Mammary epithelial cell (primary cell): ENCODE measurements at regions of chr11 and their contacts with region 1.

Region 1: GRCh38 chr11:118198370-118198769 is 21.9 kb upstream of the SCN2B start:
- DNase-seq: peak; percentile 29
- H3K4me3 ChIP-seq: peak overlapping the region in 1 of 3 experiments; percentile 30
- H3K27ac ChIP-seq: no peak overlapping the region
- H3K4me1 ChIP-seq: peaks cover 18% of the 10 kb centered on the region
- H3K27me3 ChIP-seq: no peaks in the 10 kb centered on the region
- CTCF ChIP-seq: peak; percentile 85 to 97

Region 2: GRCh38 chr11:118027691-118028090 is 170.7 kb before region 1 on chr11:
- CTCF ChIA-PET with region 1: no interaction called
- dilution Hi-C with region 1: no loop called
- in situ Hi-C with region 1: no loop called
- intact Hi-C with region 1: no loop called
- DNase-seq: no peak
- H3K4me3 ChIP-seq: no peak overlapping the region
- H3K27ac ChIP-seq: no peak overlapping the region
- H3K4me1 ChIP-seq: no peaks in the 10 kb centered on the region
- H3K27me3 ChIP-seq: no peaks in the 10 kb centered on the region
- CTCF ChIP-seq: no peak

Region 3: DNA sequence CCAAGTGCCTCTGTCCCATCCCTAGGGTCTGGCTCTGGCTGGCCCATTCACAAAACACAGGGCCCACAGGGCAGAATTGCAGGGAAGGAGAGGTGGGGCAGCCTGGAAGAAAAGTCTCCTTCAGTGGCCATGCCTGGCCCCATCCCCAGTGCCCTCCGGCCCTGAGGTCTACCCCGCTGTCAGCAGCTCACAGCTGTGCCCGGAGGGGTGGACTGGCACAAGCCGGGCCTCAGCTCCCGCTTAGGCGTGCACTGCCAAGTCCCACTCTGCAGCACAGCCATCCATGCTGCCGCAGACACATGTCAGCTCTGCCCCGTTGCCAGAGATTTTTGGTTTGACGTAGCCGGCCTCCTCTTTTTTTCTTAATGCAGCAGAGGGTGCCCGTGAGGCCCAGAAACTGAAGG is 18.1 kb before region 1 on chr11:
- CTCF ChIA-PET with region 1: interaction called, 3 read pairs
- dilution Hi-C with region 1: no loop called
- in situ Hi-C with region 1: no loop called
- intact Hi-C with region 1: loop called (anchors 1 kb)
- DNase-seq: peak; percentile 64
- H3K4me3 ChIP-seq: no peak overlapping the region
- H3K27ac ChIP-seq: no peak overlapping the region
- H3K4me1 ChIP-seq: peaks cover 19% of the 10 kb centered on the region
- H3K27me3 ChIP-seq: no peaks in the 10 kb centered on the region
- CTCF ChIP-seq: peak in 1 of 2 donors; percentile 33

Region 4: DNA sequence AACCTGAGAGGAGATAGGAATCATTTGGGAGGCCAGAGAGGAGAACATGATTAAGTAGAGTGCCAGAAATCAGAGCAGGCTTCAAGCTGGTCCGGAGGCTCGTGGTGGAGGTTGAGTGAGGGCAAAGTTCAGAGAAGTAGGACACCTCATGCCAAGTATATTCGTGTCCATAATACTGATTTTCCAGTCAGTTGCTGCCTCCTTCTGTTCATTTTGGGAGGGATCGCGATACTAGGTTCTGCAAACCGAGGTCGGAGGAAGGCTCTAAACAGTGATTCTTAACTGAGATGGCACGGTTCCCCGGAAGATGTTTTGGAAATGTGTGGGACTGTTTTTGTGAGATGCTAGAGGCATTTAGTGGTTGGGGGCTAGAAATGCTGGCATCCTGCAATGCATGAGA is 92.6 kb after region 1 on chr11:
- CTCF ChIA-PET with region 1: interaction called, 4 read pairs
- dilution Hi-C with region 1: no loop called
- in situ Hi-C with region 1: loop called (anchors 5 kb)
- intact Hi-C with region 1: loop called (anchors 1 kb)
- DNase-seq: peak; percentile 63
- H3K4me3 ChIP-seq: no peak overlapping the region
- H3K27ac ChIP-seq: no peak overlapping the region
- H3K4me1 ChIP-seq: peaks cover 30% of the 10 kb centered on the region
- H3K27me3 ChIP-seq: no peaks in the 10 kb centered on the region
- CTCF ChIP-seq: peak; percentile 67 to 68

Region 5: DNA sequence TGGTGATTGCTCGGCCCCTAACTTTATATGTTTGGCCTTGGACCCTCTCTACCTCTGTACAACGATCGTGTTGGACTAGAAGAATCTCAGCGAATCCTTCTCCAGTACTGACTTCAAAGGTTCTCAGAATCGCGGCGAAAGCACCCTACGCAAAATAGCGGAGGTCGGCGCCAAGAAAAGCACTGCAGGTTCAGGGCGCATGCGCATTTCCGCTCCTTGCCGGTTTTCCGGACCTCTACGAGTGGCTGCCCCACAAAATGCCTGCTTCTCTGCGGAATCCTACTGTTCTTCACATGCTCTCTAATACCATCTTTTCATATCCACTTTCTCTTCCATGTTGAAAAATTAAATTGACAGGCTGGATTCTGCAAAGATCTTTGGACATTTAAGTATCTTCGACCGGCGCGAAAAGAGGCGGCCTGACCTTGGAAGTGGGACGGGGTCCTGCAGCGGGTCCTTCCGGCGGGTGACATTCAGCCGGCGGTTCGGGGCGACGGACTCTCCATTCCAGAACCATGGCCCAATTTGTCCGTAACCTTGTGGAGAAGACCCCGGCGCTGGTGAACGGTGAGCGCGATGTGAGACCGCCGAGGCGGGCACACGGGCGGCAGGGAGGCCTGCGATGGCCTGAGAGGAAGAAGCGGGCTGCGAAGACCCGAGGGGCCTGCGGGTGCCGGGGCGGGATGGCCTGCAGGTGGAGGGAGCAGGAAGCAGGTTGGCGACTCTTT is 202.9 kb after region 1 on chr11 and contains the start of gene ATP5MG:
- CTCF ChIA-PET with region 1: no interaction called
- dilution Hi-C with region 1: no loop called
- in situ Hi-C with region 1: no loop called
- intact Hi-C with region 1: loop called (anchors 5 kb)
- DNase-seq: peak; percentile 79
- H3K4me3 ChIP-seq: peak within 1 kb of the TSS; percentile 62 to 98 (median 90)
- H3K27ac ChIP-seq: peak within 1 kb of the TSS; percentile 83
- H3K4me1 ChIP-seq: peaks cover 9% of the 10 kb centered on the region
- H3K27me3 ChIP-seq: no peaks in the 10 kb centered on the region
- CTCF ChIP-seq: peak in 1 of 2 donors; percentile 21
- total RNA-seq, gene ATP5MG: 24.8 to 187 TPM

Region 6: DNA sequence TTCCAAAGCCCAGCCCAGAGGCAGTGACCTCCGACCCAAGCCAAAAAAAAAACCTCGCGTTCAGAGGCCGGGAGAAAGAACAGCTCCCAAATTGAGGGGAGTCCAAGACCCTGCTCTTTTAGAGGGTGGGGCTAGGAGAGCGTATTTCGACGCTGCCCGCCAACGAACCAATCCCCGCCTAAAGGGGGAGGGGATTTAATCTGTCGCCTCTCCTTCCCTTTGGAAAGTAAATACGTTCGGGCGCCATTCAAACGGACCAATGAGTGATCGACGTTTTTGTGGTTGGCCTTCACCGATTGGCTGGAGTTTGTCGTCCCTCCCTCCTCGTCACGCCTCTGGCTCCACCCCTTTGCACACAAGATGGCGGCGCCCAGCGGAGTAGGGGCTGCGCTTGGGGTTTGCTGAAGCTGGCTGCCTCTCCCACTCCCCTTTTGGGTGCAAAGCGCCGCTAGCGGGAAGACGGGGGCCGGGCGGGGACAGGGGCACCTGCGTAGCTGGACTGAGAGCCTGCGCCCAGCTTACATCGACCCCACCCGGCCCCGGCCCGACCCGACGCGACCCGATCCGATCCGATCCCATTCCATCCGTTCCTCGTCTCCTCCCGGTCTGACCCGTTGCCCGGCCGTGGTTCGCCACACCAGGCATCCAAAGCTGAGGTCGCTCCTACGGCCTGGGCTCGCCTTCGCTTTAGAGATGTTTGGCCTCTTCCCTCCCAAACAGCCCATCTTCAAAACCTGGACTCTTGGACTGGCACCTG is 1136.0 kb after region 1 on chr11 and contains the start of gene RNF26:
- CTCF ChIA-PET with region 1: interaction called, 26 read pairs
- dilution Hi-C with region 1: no loop called
- in situ Hi-C with region 1: no loop called
- intact Hi-C with region 1: no loop called
- DNase-seq: peak; percentile 95
- H3K4me3 ChIP-seq: peak within 1 kb of the TSS; percentile 63 to 97 (median 93)
- H3K27ac ChIP-seq: peak within 1 kb of the TSS; percentile 88
- H3K4me1 ChIP-seq: peaks cover 22% of the 10 kb centered on the region
- H3K27me3 ChIP-seq: no peaks in the 10 kb centered on the region
- CTCF ChIP-seq: no peak
- total RNA-seq, gene RNF26: 3.7 to 34.4 TPM